Endothelial cell of umbilical vein (primary cell): ENCODE measurements at regions of chr4 and their contacts with region 1.

Region 1: GRCh38 chr4:169270810-169271691 is at the start of gene SH3RF1:
- DNase-seq: peak; percentile 88
- H3K4me3 ChIP-seq: peak within 1 kb of the TSS; percentile 63 to 99 (median 99)
- H3K27ac ChIP-seq: peak within 1 kb of the TSS; percentile 91
- H3K4me1 ChIP-seq: peaks cover 42% of the 10 kb centered on the region
- H3K27me3 ChIP-seq: no peaks in the 10 kb centered on the region
- CTCF ChIP-seq: no peak
- POLR2A ChIP-seq: peak; percentile 65
- total RNA-seq, gene SH3RF1: 24.3 and 24.9 TPM in 2 replicates

Region 2: DNA sequence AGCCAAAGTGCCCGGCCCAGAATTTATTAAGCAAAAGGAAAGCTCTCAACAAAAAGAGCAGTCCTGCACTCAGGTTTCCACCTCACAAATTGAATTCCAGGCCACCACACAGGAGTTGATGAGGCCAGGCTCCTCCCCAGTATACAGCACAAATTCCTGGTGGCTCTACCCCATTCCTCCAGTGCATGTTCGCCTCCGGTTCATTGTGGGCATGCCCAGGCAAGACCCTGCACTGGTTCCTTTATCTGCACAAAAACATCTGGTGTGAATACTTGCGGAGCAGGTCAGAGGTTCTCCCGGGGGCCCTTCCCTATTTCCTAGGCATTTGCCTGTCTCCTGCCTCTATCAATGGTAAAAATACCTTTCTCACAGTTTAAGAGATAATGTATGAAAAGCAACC is 1373.9 kb before region 1 on chr4:
- CTCF ChIA-PET with region 1: no interaction called
- POLR2A ChIA-PET with region 1: no interaction called
- dilution Hi-C with region 1: no loop called
- intact Hi-C with region 1: no loop called
- DNase-seq: peak; percentile 96
- H3K4me3 ChIP-seq: no peak overlapping the region
- H3K27ac ChIP-seq: peak overlapping the region; percentile 67
- H3K4me1 ChIP-seq: peaks cover 2% of the 10 kb centered on the region
- H3K27me3 ChIP-seq: no peaks in the 10 kb centered on the region
- CTCF ChIP-seq: no peak
- POLR2A ChIP-seq: peak; percentile 65

Region 3: GRCh38 chr4:168999809-169000208 is 271.2 kb before region 1 on chr4:
- CTCF ChIA-PET with region 1: no interaction called
- POLR2A ChIA-PET with region 1: no interaction called
- dilution Hi-C with region 1: no loop called
- intact Hi-C with region 1: no loop called
- DNase-seq: no peak
- H3K4me3 ChIP-seq: no peak overlapping the region
- H3K27ac ChIP-seq: no peak overlapping the region
- H3K4me1 ChIP-seq: no peaks in the 10 kb centered on the region
- H3K27me3 ChIP-seq: no peaks in the 10 kb centered on the region
- CTCF ChIP-seq: no peak
- POLR2A ChIP-seq: no peak

Region 4: DNA sequence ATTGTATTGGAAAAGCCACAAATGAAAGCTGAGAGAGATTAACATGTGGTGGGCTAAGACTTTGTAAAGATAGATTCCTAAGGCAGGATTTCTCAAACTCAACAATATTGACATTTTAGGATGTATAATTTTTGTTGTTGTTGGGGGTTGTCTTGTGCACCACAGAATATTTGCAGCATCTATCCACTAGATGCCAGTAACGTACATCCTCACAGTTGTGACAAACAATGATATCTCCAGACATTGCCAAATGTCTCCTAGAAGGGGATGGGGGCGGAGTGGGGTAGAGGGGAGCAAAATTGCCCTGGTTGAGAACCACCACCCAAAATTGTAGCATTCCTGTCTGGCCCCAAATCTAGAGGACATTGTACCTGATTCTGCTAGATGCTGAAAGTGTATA is 246.3 kb before region 1 on chr4:
- CTCF ChIA-PET with region 1: interaction called, 4 read pairs
- POLR2A ChIA-PET with region 1: no interaction called
- dilution Hi-C with region 1: no loop called
- intact Hi-C with region 1: loop called (anchors 1 kb)
- DNase-seq: peak; percentile 68
- H3K4me3 ChIP-seq: no peak overlapping the region
- H3K27ac ChIP-seq: no peak overlapping the region
- H3K4me1 ChIP-seq: no peaks in the 10 kb centered on the region
- H3K27me3 ChIP-seq: no peaks in the 10 kb centered on the region
- CTCF ChIP-seq: peak; percentile 51 to 57
- POLR2A ChIP-seq: no peak

Region 5: GRCh38 chr4:169147191-169147590 is 123.9 kb before region 1 on chr4:
- CTCF ChIA-PET with region 1: interaction called, 7 read pairs
- POLR2A ChIA-PET with region 1: no interaction called
- dilution Hi-C with region 1: no loop called
- intact Hi-C with region 1: loop called (anchors 1 kb)
- DNase-seq: peak; percentile 73
- H3K4me3 ChIP-seq: no peak overlapping the region
- H3K27ac ChIP-seq: peak overlapping the region; percentile 89
- H3K4me1 ChIP-seq: peaks cover 56% of the 10 kb centered on the region
- H3K27me3 ChIP-seq: no peaks in the 10 kb centered on the region
- CTCF ChIP-seq: no peak
- POLR2A ChIP-seq: no peak

Region 6: GRCh38 chr4:169254546-169254983 is 16.5 kb before region 1 on chr4:
- CTCF ChIA-PET with region 1: interaction called, 31 read pairs
- POLR2A ChIA-PET with region 1: interaction called, 9 read pairs
- dilution Hi-C with region 1: no loop called
- intact Hi-C with region 1: loop called (anchors 1 kb)
- DNase-seq: peak; percentile 89
- H3K4me3 ChIP-seq: peak overlapping the region in 1 of 3 experiments; percentile 21
- H3K27ac ChIP-seq: peak overlapping the region; percentile 53
- H3K4me1 ChIP-seq: peaks cover 98% of the 10 kb centered on the region
- H3K27me3 ChIP-seq: no peaks in the 10 kb centered on the region
- CTCF ChIP-seq: no peak
- POLR2A ChIP-seq: peak; percentile 41

Region 7: GRCh38 chr4:169311643-169312365 is 40.8 kb after region 1 on chr4:
- CTCF ChIA-PET with region 1: interaction called, 5 read pairs
- POLR2A ChIA-PET with region 1: interaction called, 3 read pairs
- dilution Hi-C with region 1: no loop called
- intact Hi-C with region 1: loop called (anchors 2 kb)
- DNase-seq: peak; percentile 57
- H3K4me3 ChIP-seq: no peak overlapping the region
- H3K27ac ChIP-seq: no peak overlapping the region
- H3K4me1 ChIP-seq: peaks cover 13% of the 10 kb centered on the region
- H3K27me3 ChIP-seq: no peaks in the 10 kb centered on the region
- CTCF ChIP-seq: peak; percentile 60 to 66
- POLR2A ChIP-seq: no peak

Region 8: GRCh38 chr4:169582205-169582604 is 311.2 kb after region 1 on chr4:
- CTCF ChIA-PET with region 1: no interaction called
- POLR2A ChIA-PET with region 1: no interaction called
- dilution Hi-C with region 1: no loop called
- intact Hi-C with region 1: no loop called
- DNase-seq: no peak
- H3K4me3 ChIP-seq: no peak overlapping the region
- H3K27ac ChIP-seq: no peak overlapping the region
- H3K4me1 ChIP-seq: no peaks in the 10 kb centered on the region
- H3K27me3 ChIP-seq: no peaks in the 10 kb centered on the region
- CTCF ChIP-seq: no peak
- POLR2A ChIP-seq: no peak